Left colon (tissue), 2 donors: ENCODE measurements at regions of chr11 and their contacts with region 1.

Region 1: DNA sequence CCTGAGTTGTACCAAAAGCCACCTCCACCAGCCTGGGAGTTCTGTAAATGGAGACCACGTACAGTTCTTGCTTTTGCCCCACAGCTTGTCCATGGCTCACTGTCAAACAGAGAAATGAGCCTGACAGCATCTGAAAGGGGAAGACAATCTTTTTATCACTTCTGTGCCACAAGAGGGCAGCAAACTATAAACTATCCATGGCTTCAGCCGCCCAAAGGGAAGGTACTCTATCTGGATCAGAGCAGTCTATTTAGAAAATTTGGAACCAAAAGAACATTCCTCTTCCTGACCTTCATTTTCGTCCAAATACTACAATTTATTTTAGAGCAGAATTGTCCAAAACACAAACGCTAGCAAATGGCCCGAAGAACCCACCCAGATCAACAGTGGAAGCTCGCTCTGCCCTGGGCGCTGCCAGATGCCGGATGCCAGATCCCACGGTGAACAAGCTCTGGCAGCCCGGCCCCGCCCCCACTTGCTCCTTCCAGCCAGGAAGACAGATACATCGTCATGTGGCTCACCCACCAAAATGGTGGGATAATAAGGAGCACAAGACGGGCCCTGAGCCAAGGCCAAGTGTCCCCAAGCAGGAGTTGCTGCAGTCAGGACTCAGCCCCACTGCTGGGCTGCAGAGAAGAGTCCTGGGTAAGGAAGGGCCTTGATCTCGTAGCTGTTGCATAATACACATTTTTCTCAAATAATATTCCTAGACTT is 23.9 kb upstream of the SCGB1A1 start:
- DNase-seq: peak; percentile 72 to 74
- ATAC-seq: peak; percentile 84

Region 2: DNA sequence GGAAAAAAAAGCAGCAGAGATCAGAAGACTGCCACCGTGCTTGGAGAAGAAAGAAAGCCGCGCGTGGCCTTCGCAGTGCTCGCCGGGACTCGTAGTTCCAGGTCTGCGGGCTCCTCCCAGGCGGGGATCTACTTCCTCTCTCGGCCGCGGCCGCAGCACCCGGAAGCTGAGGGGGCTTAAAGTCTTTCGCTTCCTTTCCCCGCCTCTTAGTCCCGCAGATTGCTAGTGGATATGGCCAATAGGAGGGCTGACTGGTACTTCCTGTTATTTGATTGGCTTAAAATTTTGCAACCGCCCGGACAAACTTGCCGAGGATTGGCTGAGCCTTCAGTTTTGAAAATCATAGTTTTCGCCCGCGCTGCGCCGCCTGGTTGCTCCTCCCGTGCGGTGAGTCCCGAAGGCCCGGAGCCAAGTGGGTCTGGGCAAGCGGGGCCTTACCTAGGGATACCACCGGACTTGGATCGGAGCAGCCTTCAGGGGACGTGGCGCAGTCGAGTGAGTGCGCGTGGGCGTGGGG is 271.3 kb before region 1 on chr11 and contains the start of gene INCENP:
- intact Hi-C with region 1: no loop called
- DNase-seq: peak; percentile 95 to 97
- ATAC-seq: peak; percentile 98
- total RNA-seq, gene INCENP: 23.1 to 29.3 TPM

Region 3: GRCh38 chr11:62556108-62556871 is 161.3 kb after region 1 on chr11:
- intact Hi-C with region 1: loop called in 1 of 2 experiments (anchors 10 kb)
- DNase-seq: peak; percentile 85 to 94
- ATAC-seq: peak; percentile 54